ENCODE measurements at regions of chr17 and their contacts with region 1.

Region 1: DNA sequence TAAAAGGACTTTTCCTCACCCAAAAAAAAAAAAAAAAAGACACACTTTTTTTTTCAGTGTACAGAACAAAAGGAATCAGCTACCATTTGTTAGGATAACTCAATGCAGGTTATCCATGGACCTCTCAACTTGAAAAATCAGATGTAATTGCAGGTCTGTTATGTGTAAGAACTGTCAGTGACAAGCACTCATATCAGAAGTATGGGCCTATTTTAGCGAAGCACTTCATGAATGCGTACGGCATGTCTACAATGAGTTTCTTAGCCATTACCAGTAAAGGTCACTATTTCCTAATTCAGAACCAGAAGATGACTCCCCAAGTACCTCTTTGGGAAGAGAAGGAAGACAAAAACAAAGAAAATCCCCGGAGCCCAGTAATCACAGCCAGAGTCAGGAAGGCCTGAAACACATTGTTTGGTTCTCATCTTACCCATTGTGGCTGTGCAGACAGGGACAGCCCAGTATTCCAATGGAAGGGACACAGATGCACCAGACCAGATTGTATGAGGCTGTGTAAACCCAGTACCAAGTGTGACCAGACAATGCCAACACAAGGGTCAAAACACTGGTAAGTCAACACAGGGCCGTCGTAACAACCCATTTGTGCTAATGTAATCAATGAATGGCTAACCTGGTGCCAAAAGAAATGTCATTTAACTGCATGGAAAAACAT is 188.0 kb downstream of the PMP22 start:
- DNase-seq: no peak
- H3K4me3 ChIP-seq: no peak overlapping the region
- H3K27ac ChIP-seq: no peak overlapping the region
- H3K4me1 ChIP-seq: no peaks in the 10 kb centered on the region
- H3K27me3 ChIP-seq: no peaks in the 10 kb centered on the region
- CTCF ChIP-seq: no peak

Region 2: DNA sequence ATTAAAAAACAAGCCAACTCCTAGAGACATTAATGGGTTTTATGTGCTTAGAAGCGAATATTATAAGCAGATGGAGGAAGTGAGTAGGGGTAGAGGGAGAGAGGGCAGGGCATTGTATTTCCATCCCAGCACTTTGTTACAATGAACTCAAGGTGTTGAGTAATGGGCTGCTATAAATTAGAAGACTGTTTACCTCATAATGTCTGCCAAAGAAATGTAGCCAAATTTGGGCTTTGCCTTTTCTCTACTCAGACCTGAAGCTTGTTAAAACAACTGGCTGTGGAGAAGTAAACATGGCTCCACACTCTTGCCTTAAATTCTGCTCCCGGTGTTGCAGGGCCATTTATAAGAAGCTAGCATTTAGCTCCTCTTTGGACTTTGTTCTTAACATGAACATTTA is 53.3 kb after region 1 on chr17:
- CTCF ChIA-PET with region 1: interaction called, 11 read pairs
- POLR2A ChIA-PET with region 1: no interaction called
- intact Hi-C with region 1: no loop called
- DNase-seq: no peak
- H3K4me3 ChIP-seq: no peak overlapping the region
- H3K27ac ChIP-seq: no peak overlapping the region
- H3K4me1 ChIP-seq: no peaks in the 10 kb centered on the region
- H3K27me3 ChIP-seq: no peaks in the 10 kb centered on the region
- CTCF ChIP-seq: no peak

Region 3: DNA sequence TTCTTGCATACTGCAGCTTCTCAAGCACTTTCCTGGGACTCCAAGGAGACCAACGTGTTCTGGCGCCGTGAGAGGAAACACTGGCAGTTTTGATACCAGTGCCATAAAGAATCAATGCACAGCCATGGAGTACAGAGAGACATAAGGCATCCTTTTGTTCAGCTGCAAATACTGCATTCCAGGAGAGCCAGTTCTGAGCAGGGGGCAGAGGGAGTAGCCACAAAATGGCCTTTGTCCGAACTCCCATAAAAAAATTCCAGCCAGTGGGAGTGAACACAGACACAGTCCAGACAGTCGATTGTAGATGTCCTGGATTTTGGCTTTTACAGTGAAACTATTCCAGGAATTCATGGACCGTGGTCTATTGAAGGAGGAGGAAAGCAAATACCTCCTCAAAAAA is 300.5 kb after region 1 on chr17:
- CTCF ChIA-PET with region 1: no interaction called
- POLR2A ChIA-PET with region 1: no interaction called
- intact Hi-C with region 1: no loop called
- DNase-seq: no peak
- H3K4me3 ChIP-seq: no peak overlapping the region
- H3K27ac ChIP-seq: no peak overlapping the region
- H3K4me1 ChIP-seq: no peaks in the 10 kb centered on the region
- H3K27me3 ChIP-seq: peaks cover 2% of the 10 kb centered on the region
- CTCF ChIP-seq: no peak

Measured in A673 (cell line).